ENCODE measurements at regions of chr12 and their contacts with region 1.

Region 1: GRCh38 chr12:3777206-3777809 is 24.4 kb upstream of the CRACR2A start:
- DNase-seq: peak in 3 of 9 experiments; percentile 7 to 63 (median 54)
- ATAC-seq: peak; percentile 57
- H3K4me3 ChIP-seq: no peak overlapping the region
- H3K4me3 Mint-ChIP-seq: no peak overlapping the region
- H3K27ac ChIP-seq: no peak overlapping the region
- H3K27ac Mint-ChIP-seq: no peak overlapping the region
- H3K4me1 ChIP-seq: no peaks in the 10 kb centered on the region
- H3K4me1 Mint-ChIP-seq: peaks cover 4% of the 10 kb centered on the region
- H3K27me3 ChIP-seq: no peaks in the 10 kb centered on the region
- H3K27me3 Mint-ChIP-seq: no peaks in the 10 kb centered on the region
- CTCF ChIP-seq: peak; percentile 71

Region 2: GRCh38 chr12:3658327-3659163 is 118.8 kb before region 1 on chr12:
- CTCF ChIA-PET with region 1: interaction called, 3 read pairs
- POLR2A ChIA-PET with region 1: no interaction called
- intact Hi-C with region 1: loop called (anchors 1 kb)
- DNase-seq: peak in 7 of 9 experiments; percentile 7 to 60 (median 39)
- ATAC-seq: no peak
- H3K4me3 ChIP-seq: no peak overlapping the region
- H3K4me3 Mint-ChIP-seq: no peak overlapping the region
- H3K27ac ChIP-seq: no peak overlapping the region
- H3K27ac Mint-ChIP-seq: no peak overlapping the region
- H3K4me1 ChIP-seq: no peaks in the 10 kb centered on the region
- H3K4me1 Mint-ChIP-seq: no peaks in the 10 kb centered on the region
- H3K27me3 ChIP-seq: no peaks in the 10 kb centered on the region
- H3K27me3 Mint-ChIP-seq: no peaks in the 10 kb centered on the region
- CTCF ChIP-seq: peak; percentile 38

Measured in CD8-positive, alpha-beta T cell (primary cell).